ENCODE measurements at regions of chr7 and their contacts with region 1.

Region 1: GRCh38 chr7:106384371-106384770 is 99.6 kb upstream of the NAMPT start:
- DNase-seq: no peak
- H3K4me3 ChIP-seq: no peak overlapping the region
- H3K27me3 ChIP-seq: peaks cover 1% of the 10 kb centered on the region; the same call in 1 of the 2 replicates
- CTCF ChIP-seq: no peak

Region 2: DNA sequence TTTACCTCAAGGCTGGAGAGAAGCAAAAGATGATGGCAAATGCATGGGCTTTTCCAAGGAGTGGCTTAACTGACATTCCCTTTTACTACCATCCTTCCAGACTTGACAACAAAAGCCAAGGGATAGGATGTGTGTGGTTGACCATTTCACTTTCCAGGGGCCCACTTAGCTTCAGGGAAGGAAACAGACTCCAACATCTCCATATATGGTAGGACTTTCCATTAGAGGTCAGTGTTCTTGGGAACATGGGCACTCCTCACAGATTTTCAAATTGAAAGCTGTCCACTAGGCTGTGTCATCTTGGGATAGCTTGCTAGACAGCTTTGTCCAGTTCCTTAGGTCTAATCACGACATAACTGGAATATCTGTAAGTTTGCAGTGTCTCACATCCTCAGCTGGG is 18.5 kb after region 1 on chr7:
- CTCF ChIA-PET with region 1: interaction called, 10 read pairs
- POLR2A ChIA-PET with region 1: no interaction called
- DNase-seq: no peak
- H3K4me3 ChIP-seq: no peak overlapping the region
- H3K27me3 ChIP-seq: peaks cover 2% of the 10 kb centered on the region; the same call in 1 of the 2 replicates
- CTCF ChIP-seq: no peak

Measured in BJ (cell line).